Activated CD4-positive, alpha-beta T cell treated with anti-CD3 and anti-CD28 coated beads, Interleukin-2, amount 10 ng/mL, durations not matched to agents 24 days and 14 days (primary cell): ENCODE measurements at regions of chr1 and their contacts with region 1.

Region 1: GRCh38 chr1:186078245-186078644 is 296.8 kb downstream of the TPR start:
- DNase-seq: no peak
- H3K4me3 Mint-ChIP-seq: no peak overlapping the region
- H3K27ac Mint-ChIP-seq: no peak overlapping the region
- H3K4me1 Mint-ChIP-seq: peaks cover 3% of the 10 kb centered on the region
- H3K27me3 Mint-ChIP-seq: peaks cover 2% of the 10 kb centered on the region

Region 2: GRCh38 chr1:186042216-186042615 is 36.0 kb before region 1 on chr1:
- intact Hi-C with region 1: no loop called
- DNase-seq: no peak
- H3K4me3 Mint-ChIP-seq: no peak overlapping the region
- H3K27ac Mint-ChIP-seq: no peak overlapping the region
- H3K4me1 Mint-ChIP-seq: no peaks in the 10 kb centered on the region
- H3K27me3 Mint-ChIP-seq: no peaks in the 10 kb centered on the region

Region 3: GRCh38 chr1:186059312-186059711 is 18.9 kb before region 1 on chr1:
- intact Hi-C with region 1: no loop called
- DNase-seq: no peak
- H3K4me3 Mint-ChIP-seq: no peak overlapping the region
- H3K27ac Mint-ChIP-seq: no peak overlapping the region
- H3K4me1 Mint-ChIP-seq: no peaks in the 10 kb centered on the region
- H3K27me3 Mint-ChIP-seq: no peaks in the 10 kb centered on the region

Region 4: GRCh38 chr1:186884251-186884650 is 806.0 kb after region 1 on chr1:
- intact Hi-C with region 1: loop called (anchors 10 kb)
- DNase-seq: no peak
- H3K4me3 Mint-ChIP-seq: no peak overlapping the region
- H3K27ac Mint-ChIP-seq: no peak overlapping the region
- H3K4me1 Mint-ChIP-seq: no peaks in the 10 kb centered on the region
- H3K27me3 Mint-ChIP-seq: no peaks in the 10 kb centered on the region